Breast epithelium (tissue), 4 donors: ENCODE measurements at regions of chr14 and their contacts with region 1.

Region 1: DNA sequence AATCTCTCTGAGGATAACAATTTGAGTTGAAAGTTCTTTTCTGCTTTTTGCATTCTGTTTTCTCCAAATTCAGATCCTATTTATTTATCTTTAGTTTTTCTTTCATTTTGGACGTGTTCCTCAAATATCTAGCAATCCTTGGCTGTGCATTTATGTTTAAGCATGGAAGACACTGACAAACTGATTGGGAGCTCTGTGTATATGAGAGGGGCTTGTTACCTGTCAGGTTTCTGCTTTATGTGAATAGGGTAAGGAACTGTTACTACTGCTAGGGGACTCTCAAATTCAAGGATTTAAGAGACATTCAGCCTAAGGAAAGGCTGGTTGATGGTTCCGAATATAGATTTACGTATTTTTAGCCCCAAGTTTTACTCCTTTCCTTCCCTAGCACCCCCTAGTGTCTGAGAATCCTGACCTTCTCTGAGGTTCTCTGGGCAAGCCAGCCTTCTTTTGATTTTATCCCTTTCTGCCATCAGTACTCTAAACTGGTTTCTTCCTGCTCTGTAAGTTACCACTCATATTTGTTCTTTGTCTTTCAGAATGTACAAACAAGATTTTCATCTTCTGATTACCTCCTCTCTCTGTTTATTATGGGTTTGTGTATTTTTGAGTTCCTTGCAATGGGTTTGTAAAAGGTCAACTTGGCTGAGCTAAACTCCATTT is 30.5 kb downstream of the YLPM1 start:
- DNase-seq: no peak
- H3K4me3 ChIP-seq: no peak overlapping the region
- H3K27ac ChIP-seq: peak overlapping the region; percentile 28 to 65
- H3K4me1 ChIP-seq: no peaks in the 10 kb centered on the region
- H3K27me3 ChIP-seq: no peaks in the 10 kb centered on the region
- CTCF ChIP-seq: peak in 1 of 3 donors; percentile 28
- POLR2A ChIP-seq: no peak

Region 2: DNA sequence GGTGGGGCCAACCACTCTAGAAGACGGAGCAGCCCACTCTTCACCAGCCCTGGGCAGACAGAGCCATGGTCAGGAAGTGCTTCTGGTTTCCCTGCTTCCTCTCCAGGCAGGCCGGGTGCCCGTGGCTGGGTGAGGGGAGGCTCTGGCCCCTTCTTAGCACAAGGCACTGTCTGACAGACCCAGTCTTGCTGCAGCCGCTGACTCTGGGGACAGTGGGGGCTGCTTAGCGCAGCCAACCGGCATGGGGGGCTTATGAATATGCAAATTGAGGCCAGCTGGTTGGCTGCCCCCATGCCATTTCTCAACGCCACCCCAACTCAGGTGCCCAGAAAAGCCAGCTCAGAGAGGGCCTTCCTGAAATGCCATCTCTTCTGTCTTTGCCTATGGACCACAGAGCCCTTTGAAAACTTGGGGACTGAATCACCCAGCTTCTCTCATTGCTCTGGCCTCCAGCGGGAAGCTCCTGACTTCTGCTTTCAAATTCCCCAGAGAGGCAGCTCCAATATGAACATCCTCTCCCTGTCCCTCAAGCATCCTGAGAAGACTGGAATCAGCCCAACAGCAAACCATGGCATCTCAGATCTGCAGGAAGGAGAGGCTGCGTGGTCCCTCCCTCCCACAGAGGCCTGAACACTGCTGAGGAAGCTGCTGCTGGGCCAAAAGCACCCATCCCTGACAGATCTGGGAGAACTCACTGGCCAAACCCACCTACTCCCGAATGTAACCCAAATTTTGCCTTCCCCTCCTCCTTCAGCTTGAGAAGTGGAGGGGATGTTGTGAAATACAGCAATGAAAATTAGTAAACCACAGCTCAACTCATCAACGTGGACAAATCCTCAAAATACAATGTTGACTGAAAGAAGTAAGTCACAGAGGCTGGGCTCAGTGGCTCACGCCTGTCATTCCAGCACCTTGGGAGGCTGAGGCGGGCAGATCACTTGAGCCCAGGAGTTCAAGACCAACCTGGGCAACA is 82.6 kb after region 1 on chr14 and contains the start of gene PROX2:
- intact Hi-C with region 1: loop called (anchors 2 kb)
- DNase-seq: no peak
- H3K4me3 ChIP-seq: no peak within 1 kb of the TSS
- H3K27ac ChIP-seq: no peak within 1 kb of the TSS
- H3K4me1 ChIP-seq: no peaks in the 10 kb centered on the region
- H3K27me3 ChIP-seq: no peaks in the 10 kb centered on the region
- CTCF ChIP-seq: no peak
- POLR2A ChIP-seq: no peak
- total RNA-seq, gene PROX2: not detected

Region 3: GRCh38 chr14:75752907-75753594 is 959.4 kb after region 1 on chr14:
- intact Hi-C with region 1: loop called (anchors 10 kb)
- DNase-seq: no peak
- H3K4me3 ChIP-seq: no peak overlapping the region
- H3K27ac ChIP-seq: no peak overlapping the region
- H3K4me1 ChIP-seq: no peaks in the 10 kb centered on the region
- H3K27me3 ChIP-seq: no peaks in the 10 kb centered on the region
- CTCF ChIP-seq: no peak
- POLR2A ChIP-seq: no peak